ENCODE measurements at regions of chr18 and their contacts with region 1.

Region 1: DNA sequence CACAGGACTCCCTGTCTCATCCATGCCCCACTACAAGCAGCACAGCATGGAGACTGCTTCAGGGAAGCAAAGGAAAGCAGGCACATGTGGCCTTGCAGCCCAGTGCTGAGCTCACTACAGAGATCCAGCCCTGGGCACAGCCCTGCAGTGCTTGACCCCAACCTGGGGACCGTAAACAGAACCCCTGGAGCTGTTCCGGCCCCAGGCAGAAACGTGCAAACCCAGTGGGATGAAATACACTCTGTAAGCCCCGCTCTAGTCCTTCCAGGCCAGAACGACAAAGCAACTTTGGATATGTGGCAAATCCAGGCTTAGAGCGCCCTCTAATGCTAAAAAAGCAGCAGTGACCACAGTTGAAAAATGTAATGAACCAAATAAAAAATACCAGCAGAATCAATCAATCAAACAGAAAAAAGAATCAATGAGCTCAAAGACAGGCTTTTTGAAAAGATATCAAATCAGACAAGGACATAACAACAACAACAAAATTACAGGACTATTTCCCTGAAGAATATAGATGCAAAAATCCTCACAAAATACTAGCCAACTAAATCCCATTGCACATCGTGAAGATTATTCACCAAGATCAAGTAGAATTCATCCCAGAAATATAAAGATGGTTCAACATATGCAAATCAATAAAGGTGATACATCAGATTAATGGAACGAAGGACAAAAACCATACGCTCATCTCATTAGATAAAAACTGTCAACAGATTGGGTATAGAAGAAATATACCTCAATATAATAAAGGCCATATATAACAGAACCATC is 45.6 kb downstream of the ZNF519 start:
- DNase-seq: no peak

Region 2: GRCh38 chr18:13823707-13824395 is 262.8 kb before region 1 on chr18 and contains the start of gene MC5R:
- intact Hi-C with region 1: loop called (anchors 2 kb)
- DNase-seq: no peak
- total RNA-seq, gene MC5R: not detected

Region 3: DNA sequence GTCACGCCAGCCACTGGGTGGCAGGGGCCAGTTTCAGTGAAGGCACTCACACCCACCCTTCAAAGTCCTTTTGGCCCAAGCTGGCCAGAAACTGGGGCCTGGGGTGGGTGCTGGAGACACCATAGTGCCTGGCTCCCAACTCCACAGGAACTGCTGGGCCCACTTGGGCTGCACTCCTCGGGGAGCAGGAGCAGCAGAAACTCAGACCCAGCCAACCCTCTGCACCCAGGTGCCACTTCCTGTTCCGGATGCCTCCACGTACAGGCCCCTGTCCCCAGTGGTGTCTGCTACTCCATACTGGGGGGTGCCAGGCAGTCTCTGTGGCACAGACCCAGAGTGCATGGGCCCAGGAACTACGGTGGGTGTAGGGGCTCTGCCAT is 88.1 kb after region 1 on chr18:
- intact Hi-C with region 1: no loop called
- DNase-seq: no peak